K562 (cell line): ENCODE measurements at regions of chr1 and their contacts with region 1.

Region 1: DNA sequence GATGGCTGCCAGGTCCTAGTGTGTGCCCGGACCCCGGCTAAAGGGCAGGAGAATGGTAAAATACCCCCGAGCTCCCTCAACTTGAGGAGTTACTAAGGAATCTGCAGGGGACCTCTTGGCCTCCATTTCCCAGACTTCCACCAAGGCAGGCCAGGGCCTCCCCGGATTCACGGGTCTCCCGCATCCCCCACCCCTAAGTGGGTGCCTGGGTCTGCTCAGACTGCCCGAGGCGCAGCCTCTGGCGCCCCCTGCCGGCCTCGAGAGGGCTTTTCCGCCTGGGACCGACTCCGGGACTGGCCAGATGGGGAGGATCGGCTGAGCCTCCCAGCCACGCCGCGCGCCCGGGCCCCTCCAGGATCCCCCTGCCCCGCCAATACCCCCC is 1.7 kb downstream of the PLEKHG5 start:
- DNase-seq: peak; percentile 91 to 97 (median 96)
- ATAC-seq: peak; percentile 91
- H3K4me3 ChIP-seq: peak overlapping the region; percentile 40
- H3K27ac ChIP-seq: no peak overlapping the region
- H3K4me1 ChIP-seq: peaks cover 4 to 43% of the 10 kb centered on the region in 2 experiments; a peak in 2 of 5 replicates
- H3K27me3 ChIP-seq: peaks cover 18 to 70% of the 10 kb centered on the region in 2 experiments; a peak in 4 of 5 replicates
- CTCF ChIP-seq: peak; percentile 95 to 97 (median 97)
- EP300 ChIP-seq: no peak
- POLR2A ChIP-seq: no peak
- RAD21 ChIP-seq: peak; percentile 27 to 73; a peak in 3 of 4 replicates

Region 2: GRCh38 chr1:6325482-6325881 is 164.3 kb before region 1 on chr1:
- CTCF ChIA-PET with region 1: no interaction called
- POLR2A ChIA-PET with region 1: no interaction called
- in situ Hi-C with region 1: no loop called
- intact Hi-C with region 1: no loop called
- DNase-seq: no peak
- ATAC-seq: no peak
- H3K4me3 ChIP-seq: no peak overlapping the region
- H3K27ac ChIP-seq: no peak overlapping the region
- H3K4me1 ChIP-seq: peaks cover 0 to 10% of the 10 kb centered on the region in 2 experiments; a peak in 1 of 5 replicates
- H3K27me3 ChIP-seq: no peaks in the 10 kb centered on the region
- CTCF ChIP-seq: no peak
- EP300 ChIP-seq: no peak
- POLR2A ChIP-seq: no peak
- RAD21 ChIP-seq: no peak

Region 3: DNA sequence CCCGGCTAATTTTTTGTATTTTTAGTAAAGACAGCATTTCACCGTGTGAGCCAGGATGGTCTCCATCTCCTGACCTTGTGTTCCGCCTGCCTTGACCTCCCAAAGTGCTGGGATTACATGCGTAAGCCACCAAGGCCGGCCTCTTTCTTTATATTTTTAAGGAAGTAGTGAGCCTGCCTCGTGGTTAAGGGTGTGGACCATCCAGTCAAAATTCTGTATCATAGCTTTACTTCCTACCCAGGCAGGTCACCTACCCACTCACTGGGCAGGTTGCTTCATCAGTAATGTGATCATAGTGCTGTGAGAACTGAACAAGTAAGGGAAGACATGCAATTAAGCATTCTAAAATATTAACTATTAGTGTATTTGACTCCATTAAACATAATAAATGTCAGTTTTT is 88.1 kb before region 1 on chr1:
- CTCF ChIA-PET with region 1: interaction called, 9 read pairs
- POLR2A ChIA-PET with region 1: no interaction called
- in situ Hi-C with region 1: no loop called
- intact Hi-C with region 1: loop called (anchors 5 kb)
- DNase-seq: no peak
- ATAC-seq: no peak
- H3K4me3 ChIP-seq: no peak overlapping the region
- H3K27ac ChIP-seq: no peak overlapping the region
- H3K4me1 ChIP-seq: peaks cover 0 to 12% of the 10 kb centered on the region in 2 experiments; a peak in 3 of 5 replicates
- H3K27me3 ChIP-seq: peaks cover 6% of the 10 kb centered on the region in 2 experiments
- CTCF ChIP-seq: no peak
- EP300 ChIP-seq: no peak
- POLR2A ChIP-seq: no peak
- RAD21 ChIP-seq: no peak

Region 4: GRCh38 chr1:6523566-6523965 is 33.8 kb after region 1 on chr1:
- CTCF ChIA-PET with region 1: interaction called, 17 read pairs
- POLR2A ChIA-PET with region 1: interaction called, 6 read pairs
- in situ Hi-C with region 1: no loop called
- intact Hi-C with region 1: loop called (anchors 1 kb)
- DNase-seq: peak; percentile 75 to 83 (median 79)
- ATAC-seq: peak; percentile 88
- H3K4me3 ChIP-seq: no peak overlapping the region
- H3K27ac ChIP-seq: no peak overlapping the region
- H3K4me1 ChIP-seq: peaks cover 0 to 7% of the 10 kb centered on the region in 2 experiments; a peak in 2 of 5 replicates
- H3K27me3 ChIP-seq: no peaks in the 10 kb centered on the region
- CTCF ChIP-seq: peak; percentile 84 to 93 (median 85)
- EP300 ChIP-seq: no peak
- POLR2A ChIP-seq: no peak
- RAD21 ChIP-seq: peak; percentile 14 to 72; a peak in 3 of 4 replicates

Region 5: DNA sequence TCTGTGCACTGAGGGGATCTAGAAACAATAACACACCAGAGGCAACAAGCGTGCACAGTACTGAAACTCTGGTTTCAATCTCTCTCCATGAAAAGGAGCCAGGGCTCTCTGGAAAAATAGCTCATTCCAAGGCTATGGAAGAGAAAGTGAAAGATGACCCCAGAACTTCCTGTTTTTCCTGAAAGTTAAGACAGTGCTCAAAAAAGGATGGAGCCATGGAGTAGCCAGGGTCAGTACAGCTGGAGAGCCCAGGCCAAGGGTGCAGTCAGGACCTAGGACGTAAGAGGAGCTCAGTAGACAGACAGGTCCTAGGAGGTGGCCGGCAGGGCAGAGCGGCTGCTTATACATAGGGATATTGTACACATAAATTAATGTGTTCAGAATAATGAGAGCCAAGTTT is 45.4 kb after region 1 on chr1:
- CTCF ChIA-PET with region 1: no interaction called
- POLR2A ChIA-PET with region 1: no interaction called
- in situ Hi-C with region 1: no loop called
- intact Hi-C with region 1: no loop called
- DNase-seq: peak in 1 of 4 experiments; percentile 3
- ATAC-seq: no peak
- H3K4me3 ChIP-seq: no peak overlapping the region
- H3K27ac ChIP-seq: no peak overlapping the region
- H3K4me1 ChIP-seq: no peaks in the 10 kb centered on the region
- H3K27me3 ChIP-seq: no peaks in the 10 kb centered on the region
- CTCF ChIP-seq: no peak
- EP300 ChIP-seq: no peak
- POLR2A ChIP-seq: no peak
- RAD21 ChIP-seq: no peak

Region 6: GRCh38 chr1:6634371-6635052 is 144.7 kb after region 1 on chr1:
- CTCF ChIA-PET with region 1: interaction called, 4 read pairs
- POLR2A ChIA-PET with region 1: no interaction called
- in situ Hi-C with region 1: loop called (anchors 10 kb)
- intact Hi-C with region 1: no loop called
- DNase-seq: peak; percentile 53 to 68 (median 59)
- ATAC-seq: peak; percentile 91
- H3K4me3 ChIP-seq: no peak overlapping the region
- H3K27ac ChIP-seq: no peak overlapping the region
- H3K4me1 ChIP-seq: peaks cover 0 to 21% of the 10 kb centered on the region in 2 experiments; a peak in 1 of 5 replicates
- H3K27me3 ChIP-seq: no peaks in the 10 kb centered on the region
- CTCF ChIP-seq: peak; percentile 68 to 75 (median 72)
- EP300 ChIP-seq: no peak
- POLR2A ChIP-seq: peak; percentile 50; the same call in 1 of the 2 replicates
- RAD21 ChIP-seq: peak; percentile 25 to 71; a peak in 3 of 4 replicates

Region 7: GRCh38 chr1:7207875-7208646 is 718.3 kb after region 1 on chr1:
- CTCF ChIA-PET with region 1: no interaction called
- POLR2A ChIA-PET with region 1: no interaction called
- in situ Hi-C with region 1: loop called (anchors 25 kb)
- intact Hi-C with region 1: no loop called
- DNase-seq: peak; percentile 66 to 75 (median 70)
- ATAC-seq: peak; percentile 98
- H3K4me3 ChIP-seq: no peak overlapping the region
- H3K27ac ChIP-seq: no peak overlapping the region
- H3K4me1 ChIP-seq: no peaks in the 10 kb centered on the region
- H3K27me3 ChIP-seq: no peaks in the 10 kb centered on the region; a peak in 1 of 5 replicates
- CTCF ChIP-seq: peak; percentile 83 to 91 (median 90)
- EP300 ChIP-seq: no peak
- POLR2A ChIP-seq: no peak
- RAD21 ChIP-seq: peak; percentile 33 to 80; a peak in 3 of 4 replicates